Colonic mucosa (tissue), 4 donors: ENCODE measurements at regions of chr13 and their contacts with region 1.

Region 1: DNA sequence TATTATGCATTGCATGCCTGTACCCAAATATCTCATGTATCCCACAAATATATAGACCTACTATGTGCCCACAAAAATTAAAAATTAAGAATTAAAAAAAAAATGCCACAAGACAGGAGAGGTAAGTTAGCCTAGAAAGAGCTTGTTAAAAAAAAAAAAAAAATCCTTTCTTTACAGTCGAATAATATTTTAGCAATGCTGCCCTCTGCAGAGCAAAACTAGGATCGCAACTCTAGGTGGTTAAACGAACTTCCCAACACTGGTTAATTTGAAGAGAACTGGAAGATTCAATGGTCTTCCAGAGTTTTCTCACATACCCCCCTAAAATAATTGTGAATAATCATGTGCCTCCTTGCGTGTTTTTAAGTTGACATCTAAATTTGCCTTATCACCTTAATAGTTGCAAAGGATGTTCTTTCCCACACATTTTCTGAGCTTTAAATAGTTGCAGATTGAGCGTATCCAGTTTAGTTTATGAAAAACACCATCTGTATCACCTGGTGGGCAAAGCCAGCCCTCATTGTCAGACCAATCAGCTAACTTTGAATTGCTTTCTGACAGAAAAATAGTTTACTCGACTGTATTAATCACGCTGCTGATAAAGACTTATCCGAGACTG is 47.4 kb upstream of the RCBTB2 start:
- DNase-seq: peak; percentile 90
- H3K4me3 ChIP-seq: no peak overlapping the region
- H3K27ac ChIP-seq: no peak overlapping the region
- H3K4me1 ChIP-seq: no peaks in the 10 kb centered on the region
- H3K27me3 ChIP-seq: no peaks in the 10 kb centered on the region
- CTCF ChIP-seq: peak; percentile 61

Region 2: GRCh38 chr13:48126944-48127830 is 453.1 kb before region 1 on chr13:
- intact Hi-C with region 1: loop called (anchors 5 kb)
- DNase-seq: peak; percentile 33
- H3K4me3 ChIP-seq: no peak overlapping the region
- H3K27ac ChIP-seq: no peak overlapping the region
- H3K4me1 ChIP-seq: no peaks in the 10 kb centered on the region
- H3K27me3 ChIP-seq: no peaks in the 10 kb centered on the region
- CTCF ChIP-seq: peak; percentile 77

Region 3: DNA sequence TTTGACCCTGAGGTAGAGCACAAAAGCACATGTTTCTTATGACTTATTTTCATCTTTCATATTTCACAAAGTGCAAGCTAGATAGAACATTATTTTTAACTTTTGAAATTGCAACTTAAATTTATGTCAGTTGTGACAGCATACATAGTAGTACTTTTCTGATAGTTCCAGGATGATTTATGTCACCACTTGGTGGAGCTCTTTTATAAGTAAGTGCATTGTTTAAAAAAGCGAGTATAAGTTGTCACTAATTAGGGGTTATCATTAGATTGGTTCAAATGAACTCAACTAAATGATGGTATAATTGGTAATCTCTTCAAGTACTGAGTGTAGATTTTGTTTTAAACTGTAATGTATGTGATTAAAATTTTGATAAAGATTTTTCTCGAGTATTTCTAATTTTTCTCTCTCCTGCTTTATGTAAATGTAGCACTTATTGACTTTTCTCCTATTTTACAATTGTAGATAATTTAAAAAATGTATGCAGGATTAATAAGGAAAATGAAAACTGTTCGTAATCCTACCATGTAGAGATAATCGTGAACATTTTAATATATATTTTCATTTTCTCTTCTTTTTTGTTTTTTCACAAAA is 245.7 kb before region 1 on chr13:
- intact Hi-C with region 1: loop called (anchors 2 kb)
- DNase-seq: no peak
- H3K4me3 ChIP-seq: no peak overlapping the region
- H3K27ac ChIP-seq: no peak overlapping the region
- H3K4me1 ChIP-seq: no peaks in the 10 kb centered on the region
- H3K27me3 ChIP-seq: no peaks in the 10 kb centered on the region
- CTCF ChIP-seq: peak; percentile 49

Region 4: DNA sequence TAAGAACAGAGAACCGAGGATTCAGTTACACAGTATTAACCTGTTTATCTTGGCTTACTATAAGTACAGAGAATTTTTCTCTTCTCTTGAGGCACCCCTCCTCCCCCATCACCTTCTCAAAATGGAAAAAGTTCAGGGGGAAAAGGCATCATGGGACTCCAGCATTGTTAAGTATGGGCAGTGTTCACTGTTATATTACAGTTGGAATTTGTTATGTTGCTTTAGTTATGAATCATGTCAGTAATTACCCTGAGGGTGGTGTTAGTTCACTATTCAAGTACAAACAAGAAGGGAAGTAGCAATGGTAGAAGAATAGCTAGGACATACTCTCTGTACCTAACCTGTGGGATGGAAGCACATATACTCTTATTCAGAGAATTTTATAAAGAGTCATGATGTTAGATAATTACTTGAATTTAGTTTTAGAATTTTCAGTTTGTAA is 179.4 kb before region 1 on chr13:
- intact Hi-C with region 1: loop called (anchors 10 kb)
- DNase-seq: no peak
- H3K4me3 ChIP-seq: no peak overlapping the region
- H3K27ac ChIP-seq: no peak overlapping the region
- H3K4me1 ChIP-seq: no peaks in the 10 kb centered on the region
- H3K27me3 ChIP-seq: no peaks in the 10 kb centered on the region
- CTCF ChIP-seq: no peak

Region 5: GRCh38 chr13:48873587-48873986 is 293.3 kb after region 1 on chr13:
- intact Hi-C with region 1: no loop called
- DNase-seq: no peak
- H3K4me3 ChIP-seq: no peak overlapping the region
- H3K27ac ChIP-seq: no peak overlapping the region
- H3K4me1 ChIP-seq: no peaks in the 10 kb centered on the region
- H3K27me3 ChIP-seq: no peaks in the 10 kb centered on the region
- CTCF ChIP-seq: no peak